Activated B cell treated with CpG ODN at 0.5 μM for 24 hours (primary cell): ENCODE measurements at regions of chr2 and their contacts with region 1.

Region 1: DNA sequence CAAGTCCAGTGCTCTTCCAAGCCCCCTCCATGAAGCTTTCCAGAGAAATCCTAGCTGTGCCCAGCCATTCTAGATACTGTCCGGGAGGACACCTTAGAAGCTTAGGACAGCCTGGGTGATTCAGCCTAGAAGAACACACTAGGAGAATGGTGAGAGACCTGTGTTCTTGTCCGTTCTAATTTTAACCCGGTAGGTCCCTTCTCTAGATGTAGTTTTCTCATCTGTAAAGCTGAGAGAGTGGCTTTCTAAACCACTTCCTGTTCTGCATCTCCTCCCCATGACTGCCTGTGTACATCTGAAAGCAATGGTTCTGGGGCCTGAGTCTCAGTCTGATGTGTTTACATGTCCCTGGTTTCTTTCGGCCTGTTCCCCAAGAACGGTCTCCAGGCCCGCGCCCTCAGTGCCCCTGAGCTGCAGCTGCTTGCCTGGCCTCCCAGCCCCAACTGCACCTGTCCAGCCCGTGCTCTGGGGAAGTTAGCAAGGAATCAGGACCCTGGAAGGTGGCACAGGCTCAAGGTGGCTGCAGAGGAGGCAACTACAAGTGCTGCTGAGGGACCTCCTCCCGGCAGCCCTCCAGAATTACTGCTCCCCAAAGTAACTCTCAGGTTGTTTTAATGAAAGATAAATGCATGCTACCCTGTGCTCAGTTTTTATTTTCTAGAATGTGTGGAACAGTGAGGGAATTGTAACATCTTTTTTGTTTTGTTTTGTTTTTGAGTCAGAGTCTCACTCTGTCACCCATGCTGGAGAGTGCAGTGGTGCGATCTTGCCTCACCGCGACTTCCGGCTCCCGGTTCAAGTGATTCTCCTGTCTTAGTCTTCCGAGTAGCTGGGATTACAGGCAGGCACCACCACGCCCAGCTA is 105.9 kb downstream of the LBH start:
- DNase-seq: peak; percentile 49
- ATAC-seq: peak; percentile 85
- H3K4me3 Mint-ChIP-seq: peak overlapping the region; percentile 76
- H3K27ac Mint-ChIP-seq: peak overlapping the region; percentile 98
- H3K4me1 Mint-ChIP-seq: peaks cover 95% of the 10 kb centered on the region
- H3K27me3 Mint-ChIP-seq: no peaks in the 10 kb centered on the region
- CTCF ChIP-seq: no peak

Region 2: DNA sequence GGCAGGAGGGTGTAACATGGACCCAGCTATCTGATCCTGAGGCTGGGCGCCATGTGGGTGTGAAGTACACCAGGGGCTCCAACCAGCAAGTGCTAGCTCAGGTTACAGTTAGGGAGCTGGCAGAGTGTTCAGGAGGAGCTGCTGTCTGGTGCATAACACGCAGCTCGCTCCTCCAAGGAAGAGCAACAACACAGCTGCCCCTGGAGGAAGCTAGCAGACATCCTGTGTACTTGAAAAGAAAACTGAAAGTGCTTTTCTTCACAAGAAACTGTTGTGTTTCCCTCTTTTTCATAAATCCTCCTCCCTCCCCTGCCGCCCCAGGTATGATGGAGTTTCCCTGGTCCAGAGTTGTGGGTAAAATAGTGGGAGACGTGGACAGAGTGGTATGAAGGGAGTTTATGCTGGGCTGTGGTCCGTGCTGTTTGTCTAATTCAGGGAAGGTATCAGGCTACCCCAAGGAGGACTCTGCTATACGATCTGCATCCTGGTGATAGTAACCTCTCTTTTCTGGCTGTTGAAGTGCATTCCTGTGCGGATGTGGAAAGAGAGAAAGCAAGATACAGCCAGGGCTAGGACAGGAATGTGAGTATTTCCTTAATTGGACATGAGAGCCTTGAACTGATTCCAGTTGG is 112.0 kb before region 1 on chr2:
- CTCF ChIA-PET with region 1: interaction called, 51 read pairs
- POLR2A ChIA-PET with region 1: interaction called, 147 read pairs
- intact Hi-C with region 1: no loop called
- DNase-seq: no peak
- ATAC-seq: peak; percentile 64
- H3K4me3 Mint-ChIP-seq: peak overlapping the region; percentile 90
- H3K27ac Mint-ChIP-seq: peak overlapping the region; percentile 99
- H3K4me1 Mint-ChIP-seq: peaks cover 63% of the 10 kb centered on the region
- H3K27me3 Mint-ChIP-seq: no peaks in the 10 kb centered on the region
- CTCF ChIP-seq: no peak

Region 3: GRCh38 chr2:30282086-30282485 is 55.1 kb before region 1 on chr2:
- CTCF ChIA-PET with region 1: interaction called, 15 read pairs
- POLR2A ChIA-PET with region 1: interaction called, 46 read pairs
- intact Hi-C with region 1: no loop called
- DNase-seq: peak; percentile 70
- ATAC-seq: peak; percentile 96
- H3K4me3 Mint-ChIP-seq: peak overlapping the region; percentile 61
- H3K27ac Mint-ChIP-seq: peak overlapping the region; percentile 82
- H3K4me1 Mint-ChIP-seq: peaks cover 98% of the 10 kb centered on the region
- H3K27me3 Mint-ChIP-seq: no peaks in the 10 kb centered on the region
- CTCF ChIP-seq: no peak

Region 4: GRCh38 chr2:30321466-30321865 is 15.7 kb before region 1 on chr2:
- CTCF ChIA-PET with region 1: interaction called, 11 read pairs
- POLR2A ChIA-PET with region 1: interaction called, 6 read pairs
- intact Hi-C with region 1: loop called (anchors 1 kb)
- DNase-seq: no peak
- ATAC-seq: no peak
- H3K4me3 Mint-ChIP-seq: no peak overlapping the region
- H3K27ac Mint-ChIP-seq: no peak overlapping the region
- H3K4me1 Mint-ChIP-seq: peaks cover 47% of the 10 kb centered on the region
- H3K27me3 Mint-ChIP-seq: no peaks in the 10 kb centered on the region
- CTCF ChIP-seq: no peak

Region 5: GRCh38 chr2:30398084-30398873 is 61.1 kb after region 1 on chr2:
- CTCF ChIA-PET with region 1: no interaction called
- POLR2A ChIA-PET with region 1: no interaction called
- intact Hi-C with region 1: no loop called
- DNase-seq: no peak
- ATAC-seq: no peak
- H3K4me3 Mint-ChIP-seq: no peak overlapping the region
- H3K27ac Mint-ChIP-seq: no peak overlapping the region
- H3K4me1 Mint-ChIP-seq: no peaks in the 10 kb centered on the region
- H3K27me3 Mint-ChIP-seq: no peaks in the 10 kb centered on the region
- CTCF ChIP-seq: no peak

Region 6: GRCh38 chr2:30436859-30437435 is 99.7 kb after region 1 on chr2:
- CTCF ChIA-PET with region 1: interaction called, 3 read pairs
- POLR2A ChIA-PET with region 1: interaction called, 8 read pairs
- intact Hi-C with region 1: loop called (anchors 2 kb)
- DNase-seq: peak; percentile 20
- ATAC-seq: peak; percentile 89
- H3K4me3 Mint-ChIP-seq: peak overlapping the region; percentile 65
- H3K27ac Mint-ChIP-seq: peak overlapping the region; percentile 90
- H3K4me1 Mint-ChIP-seq: peaks cover 44% of the 10 kb centered on the region
- H3K27me3 Mint-ChIP-seq: no peaks in the 10 kb centered on the region
- CTCF ChIP-seq: no peak